ENCODE measurements at regions of chr6 and their contacts with region 1.

Region 1: GRCh38 chr6:16576451-16577368 is 184.6 kb downstream of the ATXN1 start:
- DNase-seq: peak; percentile 78
- ATAC-seq: peak; percentile 93
- H3K4me3 ChIP-seq: peak overlapping the region; percentile 8; the same call in 1 of the 2 replicates
- H3K27ac ChIP-seq: peak overlapping the region; percentile 36
- H3K4me1 ChIP-seq: peaks cover 16% of the 10 kb centered on the region
- H3K27me3 ChIP-seq: no peaks in the 10 kb centered on the region
- CTCF ChIP-seq: no peak

Region 2: GRCh38 chr6:16432075-16433032 is 144.4 kb before region 1 on chr6:
- CTCF ChIA-PET with region 1: no interaction called
- POLR2A ChIA-PET with region 1: no interaction called
- intact Hi-C with region 1: loop called (anchors 10 kb)
- DNase-seq: peak; percentile 45
- ATAC-seq: peak; percentile 46
- H3K4me3 ChIP-seq: no peak overlapping the region
- H3K27ac ChIP-seq: no peak overlapping the region
- H3K4me1 ChIP-seq: peaks cover 6% of the 10 kb centered on the region; the same call in 1 of the 2 replicates
- H3K27me3 ChIP-seq: no peaks in the 10 kb centered on the region
- CTCF ChIP-seq: no peak

Region 3: GRCh38 chr6:16635810-16636602 is 59.3 kb after region 1 on chr6:
- CTCF ChIA-PET with region 1: no interaction called
- POLR2A ChIA-PET with region 1: no interaction called
- intact Hi-C with region 1: loop called (anchors 2 kb)
- DNase-seq: peak; percentile 91
- ATAC-seq: peak; percentile 76
- H3K4me3 ChIP-seq: peak overlapping the region; percentile 43
- H3K27ac ChIP-seq: peak overlapping the region; percentile 91
- H3K4me1 ChIP-seq: peaks cover 47% of the 10 kb centered on the region
- H3K27me3 ChIP-seq: no peaks in the 10 kb centered on the region
- CTCF ChIP-seq: no peak